ENCODE measurements at regions of chr9 and their contacts with region 1.

Region 1: GRCh38 chr9:7479300-7479699 is 320.3 kb downstream of the DMAC1 start:
- DNase-seq: no peak
- ATAC-seq: no peak
- H3K4me3 ChIP-seq: no peak overlapping the region
- H3K27ac ChIP-seq: no peak overlapping the region
- H3K4me1 ChIP-seq: no peaks in the 10 kb centered on the region
- H3K27me3 ChIP-seq: no peaks in the 10 kb centered on the region
- CTCF ChIP-seq: no peak
- EP300 ChIP-seq: no peak
- POLR2A ChIP-seq: no peak
- RAD21 ChIP-seq: no peak

Region 2: GRCh38 chr9:5976674-5977397 is 1502.5 kb before region 1 on chr9:
- CTCF ChIA-PET with region 1: no interaction called
- POLR2A ChIA-PET with region 1: no interaction called
- RAD21 ChIA-PET with region 1: no interaction called
- SMC1A ChIA-PET with region 1: no interaction called
- in situ Hi-C with region 1: no loop called
- intact Hi-C with region 1: no loop called
- DNase-seq: peak; percentile 11
- ATAC-seq: peak; percentile 88
- H3K4me3 ChIP-seq: no peak overlapping the region
- H3K27ac ChIP-seq: peak overlapping the region; percentile 57
- H3K4me1 ChIP-seq: peaks cover 4% of the 10 kb centered on the region; the same call in 1 of the 2 replicates
- H3K27me3 ChIP-seq: no peaks in the 10 kb centered on the region
- CTCF ChIP-seq: peak; percentile 32 to 68 (median 36); a peak in 4 of 6 replicates
- EP300 ChIP-seq: no peak
- POLR2A ChIP-seq: no peak
- RAD21 ChIP-seq: peak; percentile 70

Region 3: GRCh38 chr9:7510199-7510598 is 30.9 kb after region 1 on chr9:
- CTCF ChIA-PET with region 1: no interaction called
- POLR2A ChIA-PET with region 1: interaction called, 11 read pairs
- RAD21 ChIA-PET with region 1: no interaction called
- SMC1A ChIA-PET with region 1: no interaction called
- in situ Hi-C with region 1: no loop called
- intact Hi-C with region 1: no loop called
- DNase-seq: no peak
- ATAC-seq: no peak
- H3K4me3 ChIP-seq: no peak overlapping the region
- H3K27ac ChIP-seq: no peak overlapping the region
- H3K4me1 ChIP-seq: no peaks in the 10 kb centered on the region
- H3K27me3 ChIP-seq: no peaks in the 10 kb centered on the region
- CTCF ChIP-seq: no peak
- EP300 ChIP-seq: no peak
- POLR2A ChIP-seq: no peak
- RAD21 ChIP-seq: no peak